ENCODE measurements at regions of chr19 and their contacts with region 1.

Region 1: DNA sequence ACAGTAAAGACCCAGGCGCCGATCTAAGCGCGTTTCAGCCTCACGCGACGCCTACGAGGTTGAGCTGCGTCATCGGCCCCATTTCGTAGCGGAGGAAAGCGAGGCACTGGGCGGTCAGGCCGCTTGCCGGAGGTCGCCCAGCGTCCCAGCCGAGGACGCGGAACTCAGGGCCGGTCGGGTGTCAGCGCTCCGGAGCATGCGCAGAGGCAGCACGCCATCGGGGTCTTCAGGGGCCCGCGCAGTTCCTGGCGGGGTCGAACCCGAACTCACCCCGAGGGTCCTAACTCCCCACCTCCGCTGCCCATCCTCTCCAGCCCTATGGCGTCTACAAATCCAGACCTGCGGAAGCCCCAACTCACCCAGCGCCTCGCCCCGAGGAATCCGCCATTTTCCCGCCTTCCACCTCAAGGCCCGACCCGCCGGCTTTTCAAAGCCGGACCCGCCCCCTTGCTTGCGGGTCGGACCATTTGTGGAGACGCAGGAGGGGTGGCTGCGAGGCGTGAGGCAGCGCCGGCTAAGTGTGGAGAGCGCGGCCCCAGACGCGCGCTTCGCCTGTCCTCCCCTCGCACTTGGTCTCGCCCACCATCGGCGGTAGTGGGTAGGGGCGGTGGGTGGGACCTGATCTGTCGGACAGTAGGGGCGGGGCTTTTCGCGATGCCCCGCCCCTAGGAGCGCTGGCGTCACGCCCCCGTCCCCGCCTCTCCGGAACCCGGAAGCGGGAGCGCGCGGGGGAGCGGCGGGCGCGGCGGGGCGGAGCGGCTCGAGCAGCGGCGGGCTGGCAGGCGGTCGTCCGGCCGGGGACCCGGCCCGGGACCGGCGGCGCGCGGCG is at the starts of genes HAUS8 and MYO9B:
- DNase-seq: peak; percentile 99
- H3K4me3 Mint-ChIP-seq: peak within 1 kb of the TSS; percentile 99
- H3K27ac Mint-ChIP-seq: peak within 1 kb of the TSS; percentile 97
- H3K4me1 Mint-ChIP-seq: peaks cover 66% of the 10 kb centered on the region
- H3K27me3 Mint-ChIP-seq: no peaks in the 10 kb centered on the region
- total RNA-seq, gene HAUS8: 32.8 and 34.9 TPM in 2 replicates
- total RNA-seq, gene MYO9B: 134 and 137 TPM in 2 replicates

Region 2: GRCh38 chr19:16659831-16660708 is 415.2 kb before region 1 on chr19 and contains the start of gene SMIM7:
- intact Hi-C with region 1: loop called (anchors 5 kb)
- DNase-seq: peak; percentile 98
- H3K4me3 Mint-ChIP-seq: peak within 1 kb of the TSS; percentile 94
- H3K27ac Mint-ChIP-seq: peak within 1 kb of the TSS; percentile 97
- H3K4me1 Mint-ChIP-seq: peaks cover 27% of the 10 kb centered on the region
- H3K27me3 Mint-ChIP-seq: peaks cover 13% of the 10 kb centered on the region
- total RNA-seq, gene SMIM7: 69.3 and 72.7 TPM in 2 replicates

Region 3: GRCh38 chr19:17125715-17126677 is 50.7 kb after region 1 on chr19:
- intact Hi-C with region 1: loop called (anchors 1 kb)
- DNase-seq: peak; percentile 77
- H3K4me3 Mint-ChIP-seq: peak overlapping the region; percentile 82
- H3K27ac Mint-ChIP-seq: peak overlapping the region; percentile 97
- H3K4me1 Mint-ChIP-seq: peaks cover 59% of the 10 kb centered on the region
- H3K27me3 Mint-ChIP-seq: no peaks in the 10 kb centered on the region

Region 4: GRCh38 chr19:17215125-17215971 is 140.1 kb after region 1 on chr19 and contains the start of gene USE1:
- intact Hi-C with region 1: loop called (anchors 1 kb)
- DNase-seq: peak; percentile 82
- H3K4me3 Mint-ChIP-seq: peak within 1 kb of the TSS; percentile 91
- H3K27ac Mint-ChIP-seq: peak within 1 kb of the TSS; percentile 99
- H3K4me1 Mint-ChIP-seq: peaks cover 11% of the 10 kb centered on the region
- H3K27me3 Mint-ChIP-seq: no peaks in the 10 kb centered on the region
- total RNA-seq, gene USE1: 34.6 and 36.0 TPM in 2 replicates

Region 5: GRCh38 chr19:17235618-17236377 is 160.5 kb after region 1 on chr19:
- intact Hi-C with region 1: loop called (anchors 2 kb)
- DNase-seq: peak; percentile 75
- H3K4me3 Mint-ChIP-seq: peak overlapping the region; percentile 85
- H3K27ac Mint-ChIP-seq: peak overlapping the region; percentile 79
- H3K4me1 Mint-ChIP-seq: peaks cover 13% of the 10 kb centered on the region
- H3K27me3 Mint-ChIP-seq: no peaks in the 10 kb centered on the region